ENCODE measurements at regions of chr17 and their contacts with region 1.

Region 1: DNA sequence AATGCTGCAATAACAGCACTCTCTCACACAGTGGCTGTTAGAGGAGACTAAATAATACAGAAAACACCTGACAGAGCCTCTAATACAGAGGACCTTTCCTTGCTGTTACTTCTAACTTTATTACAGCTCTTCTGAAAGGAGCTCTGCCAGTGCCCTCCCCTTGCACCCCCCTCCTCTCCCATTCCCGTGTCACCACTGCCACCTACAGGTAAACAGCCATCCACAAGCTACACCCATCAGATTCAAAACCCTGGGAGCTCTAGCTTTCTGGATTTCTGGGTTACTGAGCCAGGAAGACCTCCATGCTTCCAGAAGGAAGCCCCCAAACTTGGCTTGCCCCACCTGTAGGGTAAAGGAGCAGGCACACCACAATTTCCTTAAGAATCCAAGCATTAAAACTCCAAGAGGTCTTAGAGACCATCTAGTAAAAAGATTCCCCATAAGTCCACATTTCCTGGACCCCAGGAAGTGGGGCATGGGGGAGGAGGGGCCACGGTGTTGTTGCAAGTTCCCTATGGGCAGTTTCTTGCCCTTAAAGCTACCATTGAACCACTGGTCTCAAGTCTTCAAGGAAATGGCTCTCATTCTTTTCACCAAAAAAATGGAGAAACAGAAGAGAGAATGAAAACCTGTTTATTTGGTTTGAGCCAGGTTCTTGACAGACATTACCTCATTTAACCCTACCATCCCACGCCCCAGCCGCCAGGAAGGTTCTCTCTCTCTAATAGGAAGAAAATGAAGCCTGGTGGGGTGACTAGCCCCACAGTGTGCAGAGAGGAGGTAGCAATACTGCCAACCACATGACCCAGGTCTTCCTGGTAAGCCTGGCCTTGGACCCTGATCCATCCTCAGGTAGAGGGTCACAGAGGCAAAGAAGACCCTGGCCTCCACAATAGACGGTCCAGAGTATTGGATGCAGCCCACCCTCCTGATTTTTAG is 52.8 kb downstream of the TOM1L2 start:
- DNase-seq: peak; percentile 85
- H3K4me3 ChIP-seq: no peak overlapping the region
- H3K27ac ChIP-seq: peak overlapping the region; percentile 44 to 53; a peak in 3 of 4 replicates
- H3K4me1 ChIP-seq: peaks cover 19 to 39% of the 10 kb centered on the region in 2 experiments
- H3K27me3 ChIP-seq: no peaks in the 10 kb centered on the region
- CTCF ChIP-seq: peak; percentile 87
- EP300 ChIP-seq: no peak
- RAD21 ChIP-seq: peak; percentile 98

Region 2: GRCh38 chr17:17476865-17477467 is 442.5 kb before region 1 on chr17 and contains the start of gene MED9:
- CTCF ChIA-PET with region 1: no interaction called
- POLR2A ChIA-PET with region 1: no interaction called
- DNase-seq: peak; percentile 99
- H3K4me3 ChIP-seq: peak within 1 kb of the TSS; percentile 98 to 99
- H3K27ac ChIP-seq: peak within 1 kb of the TSS; percentile 62 to 74; a peak in 3 of 4 replicates
- H3K4me1 ChIP-seq: peaks cover 7 to 10% of the 10 kb centered on the region in 2 experiments; a peak in 3 of 4 replicates
- H3K27me3 ChIP-seq: 0 out of 2 replicates have a peak, but pooled peaks cover 6% of the 10 kb centered on the region
- CTCF ChIP-seq: no peak
- EP300 ChIP-seq: no peak
- RAD21 ChIP-seq: no peak
- polyA plus RNA-seq, gene MED9: 9.7 and 10.1 TPM in 2 replicates

Region 3: DNA sequence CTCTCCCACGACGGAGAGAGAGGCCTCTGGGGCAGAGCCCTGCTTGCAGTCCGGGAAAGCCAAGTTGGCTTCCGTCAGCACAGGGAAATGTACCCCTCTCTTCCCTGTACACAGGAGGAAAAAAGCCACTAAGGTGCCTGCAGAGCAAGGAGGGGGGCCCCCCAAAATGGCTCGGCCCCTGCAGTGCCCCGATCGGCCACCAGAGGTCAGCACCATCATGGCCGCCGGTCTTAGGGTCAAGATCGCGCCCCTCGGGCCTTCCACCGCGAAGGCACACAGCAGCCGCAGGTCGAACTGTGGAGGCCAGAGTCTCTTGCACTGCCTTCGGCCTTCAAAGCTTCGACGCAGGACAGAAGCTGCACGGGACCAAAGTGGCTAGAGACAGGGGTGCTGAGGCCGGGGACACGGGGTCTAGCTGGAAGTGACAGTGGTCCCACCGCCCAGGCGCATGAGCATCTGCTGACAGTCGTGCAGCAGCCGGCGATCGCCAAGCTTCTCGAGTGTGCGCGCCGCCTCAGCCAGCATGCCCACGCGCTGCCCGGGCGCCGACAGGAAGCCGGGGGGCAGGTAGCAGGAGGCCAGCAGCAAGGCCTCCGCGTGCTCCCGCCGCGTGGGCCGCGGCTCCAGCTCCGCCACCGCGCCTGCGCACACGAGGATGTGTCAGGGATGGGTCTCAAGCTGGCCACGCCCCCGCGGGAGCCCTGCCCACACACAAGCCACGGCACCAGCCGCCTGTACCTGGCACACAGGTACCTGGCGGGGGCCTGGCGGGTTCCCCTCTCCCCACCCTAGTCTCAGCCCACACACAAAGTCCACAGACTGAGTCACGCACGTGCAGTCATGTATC is 107.0 kb before region 1 on chr17:
- CTCF ChIA-PET with region 1: interaction called, 58 read pairs
- POLR2A ChIA-PET with region 1: no interaction called
- DNase-seq: peak; percentile 95
- H3K4me3 ChIP-seq: peak overlapping the region in 1 of 2 experiments; percentile 30; a peak in 1 of 4 replicates
- H3K27ac ChIP-seq: peak overlapping the region in 1 of 2 experiments; percentile 62; a peak in 2 of 4 replicates
- H3K4me1 ChIP-seq: peaks cover 0 to 56% of the 10 kb centered on the region in 2 experiments; a peak in 3 of 4 replicates
- H3K27me3 ChIP-seq: no peaks in the 10 kb centered on the region
- CTCF ChIP-seq: peak; percentile 98
- EP300 ChIP-seq: no peak
- RAD21 ChIP-seq: peak; percentile 80

Region 4: DNA sequence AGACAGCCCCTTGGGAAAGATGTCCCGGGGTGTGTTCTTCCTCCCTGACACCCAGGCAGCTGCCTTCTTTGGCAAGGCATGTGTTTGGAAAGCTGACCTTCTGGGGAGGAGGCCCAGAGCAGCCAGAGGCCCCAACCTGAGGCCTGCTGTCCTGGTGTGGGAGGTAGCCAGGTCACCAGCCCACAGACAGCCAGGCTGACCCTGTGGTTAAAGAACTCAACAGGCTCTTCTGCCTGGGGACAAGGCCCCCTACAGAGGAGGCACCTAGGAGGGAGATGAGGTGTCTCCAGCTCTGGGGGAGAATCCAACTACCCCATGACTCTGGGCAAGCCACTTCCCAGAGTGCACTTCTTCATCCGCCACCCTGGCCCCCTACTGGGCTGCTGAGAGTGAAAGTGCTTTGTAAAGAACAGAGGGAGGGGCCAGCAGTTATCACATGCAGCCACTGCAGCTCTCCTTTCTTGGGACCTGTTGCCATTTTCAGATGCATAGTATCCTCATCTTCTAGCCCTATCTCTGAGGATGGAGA is 69.5 kb before region 1 on chr17:
- CTCF ChIA-PET with region 1: interaction called, 10 read pairs
- POLR2A ChIA-PET with region 1: no interaction called
- DNase-seq: peak; percentile 58
- H3K4me3 ChIP-seq: no peak overlapping the region
- H3K27ac ChIP-seq: peak overlapping the region in 1 of 2 experiments; percentile 62; a peak in 1 of 4 replicates
- H3K4me1 ChIP-seq: peaks cover 19 to 83% of the 10 kb centered on the region in 2 experiments; a peak in 3 of 4 replicates
- H3K27me3 ChIP-seq: no peaks in the 10 kb centered on the region
- CTCF ChIP-seq: peak; percentile 29
- EP300 ChIP-seq: no peak
- RAD21 ChIP-seq: no peak

Region 5: GRCh38 chr17:17877529-17878358 is 41.7 kb before region 1 on chr17:
- CTCF ChIA-PET with region 1: interaction called, 37 read pairs
- POLR2A ChIA-PET with region 1: no interaction called
- DNase-seq: peak; percentile 74
- H3K4me3 ChIP-seq: 0 out of 4 replicates have a peak overlapping the region, but pooled peaks of 1 of the 2 experiments have one; percentile 9
- H3K27ac ChIP-seq: peak overlapping the region; percentile 84 to 99
- H3K4me1 ChIP-seq: peaks cover 15 to 55% of the 10 kb centered on the region in 2 experiments
- H3K27me3 ChIP-seq: no peaks in the 10 kb centered on the region
- CTCF ChIP-seq: 0 out of 2 replicates have a peak, but pooled peaks have one; percentile 21
- EP300 ChIP-seq: no peak; a peak in 1 of 4 replicates
- RAD21 ChIP-seq: peak; percentile 20

Region 6: DNA sequence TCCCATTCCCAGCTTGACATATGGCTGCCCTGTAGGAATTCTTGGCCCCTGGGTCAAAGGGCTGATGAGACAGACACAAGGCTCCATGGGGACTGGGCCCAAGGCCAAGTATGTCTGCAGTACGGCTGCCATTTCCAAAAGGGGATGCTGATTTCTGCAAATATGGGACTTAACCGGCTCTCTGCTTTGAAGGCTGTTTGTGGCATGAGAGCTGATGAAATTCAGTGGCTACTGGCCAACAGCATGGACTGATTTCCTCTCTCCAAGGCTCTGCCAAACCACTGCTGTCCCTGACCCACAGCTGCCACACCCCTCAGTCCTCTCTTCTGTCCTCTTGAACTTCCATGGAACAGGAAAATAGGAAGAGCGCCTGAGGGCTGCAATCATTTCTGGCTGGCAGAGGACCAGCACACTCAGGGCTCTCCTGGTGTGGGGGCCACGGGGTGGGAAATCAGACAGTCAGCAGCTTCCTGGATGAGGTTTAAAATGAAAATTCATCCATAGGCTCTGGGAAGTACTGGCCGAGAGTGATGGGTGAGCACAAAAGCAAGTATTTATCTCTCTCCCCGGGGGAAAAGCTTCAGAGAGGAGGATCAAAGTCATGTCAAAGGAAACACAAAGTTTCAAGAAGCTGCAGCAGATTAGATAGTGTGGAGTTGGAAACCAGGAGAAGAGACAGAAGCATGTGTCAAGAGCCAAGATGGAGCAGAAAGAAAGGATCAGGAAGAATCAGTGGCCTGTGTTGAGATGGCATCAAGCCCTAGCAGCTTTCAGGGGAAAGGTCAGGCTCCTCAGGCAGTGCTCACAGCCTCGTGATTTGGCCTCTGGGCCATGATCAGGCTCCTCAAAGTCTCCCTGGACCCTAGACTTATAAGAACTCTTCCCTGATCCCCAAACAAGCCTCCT is 18.6 kb before region 1 on chr17:
- CTCF ChIA-PET with region 1: interaction called, 38 read pairs
- POLR2A ChIA-PET with region 1: interaction called, 5 read pairs
- DNase-seq: peak; percentile 77
- H3K4me3 ChIP-seq: 0 out of 4 replicates have a peak overlapping the region, but pooled peaks of 1 of the 2 experiments have one; percentile 13
- H3K27ac ChIP-seq: peak overlapping the region; percentile 70 to 98
- H3K4me1 ChIP-seq: peaks cover 16 to 33% of the 10 kb centered on the region in 2 experiments
- H3K27me3 ChIP-seq: no peaks in the 10 kb centered on the region
- CTCF ChIP-seq: no peak
- EP300 ChIP-seq: peak; percentile 73 to 83; a peak in 3 of 4 replicates
- RAD21 ChIP-seq: no peak

Region 7: DNA sequence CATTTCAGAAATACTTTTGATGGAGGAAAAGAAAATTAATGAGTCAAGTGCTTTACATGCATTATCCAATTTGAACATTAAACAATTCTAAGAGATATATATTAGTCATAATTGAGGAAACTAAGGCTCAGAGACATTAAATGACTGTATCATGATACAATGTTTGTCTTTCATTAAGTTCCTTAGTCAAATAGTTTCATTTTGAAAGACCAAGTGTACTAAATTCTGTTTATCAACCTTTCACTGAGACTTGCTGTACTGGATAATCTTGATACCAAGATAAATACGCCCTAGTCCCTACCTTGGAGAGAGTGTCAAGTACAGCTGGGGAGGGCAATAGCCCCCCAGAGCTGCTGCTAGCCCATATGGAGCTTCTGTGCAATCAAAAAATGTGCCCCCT is 28.5 kb after region 1 on chr17:
- CTCF ChIA-PET with region 1: interaction called, 35 read pairs
- POLR2A ChIA-PET with region 1: no interaction called
- DNase-seq: no peak
- H3K4me3 ChIP-seq: 0 out of 4 replicates have a peak overlapping the region, but pooled peaks of 1 of the 2 experiments have one; percentile 18
- H3K27ac ChIP-seq: peak overlapping the region in 1 of 2 experiments; percentile 89; a peak in 2 of 4 replicates
- H3K4me1 ChIP-seq: peaks cover 43 to 70% of the 10 kb centered on the region in 2 experiments
- H3K27me3 ChIP-seq: no peaks in the 10 kb centered on the region
- CTCF ChIP-seq: no peak
- EP300 ChIP-seq: no peak
- RAD21 ChIP-seq: no peak

Region 8: DNA sequence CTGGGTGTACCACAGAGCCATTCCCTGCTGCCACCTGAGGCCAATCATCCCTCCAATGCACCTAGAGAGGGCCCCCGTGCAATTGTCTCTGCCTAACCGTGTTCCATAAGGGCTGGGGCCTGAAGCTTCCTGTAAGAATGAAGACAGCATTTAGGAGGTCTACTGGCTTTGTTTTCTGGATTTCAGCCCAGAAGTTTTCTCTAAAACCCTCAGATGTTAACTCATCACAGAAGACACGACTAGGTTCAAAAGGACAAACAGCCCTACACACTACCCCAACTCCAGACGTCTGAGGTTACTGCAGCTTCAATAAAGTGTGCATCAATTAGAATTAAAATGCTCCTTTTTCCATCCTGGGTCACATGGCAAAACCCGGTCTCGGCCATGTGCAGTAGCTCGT is 157.5 kb after region 1 on chr17:
- CTCF ChIA-PET with region 1: no interaction called
- POLR2A ChIA-PET with region 1: no interaction called
- DNase-seq: no peak
- H3K4me3 ChIP-seq: no peak overlapping the region
- H3K27ac ChIP-seq: no peak overlapping the region
- H3K4me1 ChIP-seq: peaks cover 0 to 2% of the 10 kb centered on the region in 2 experiments; a peak in 1 of 4 replicates
- H3K27me3 ChIP-seq: no peaks in the 10 kb centered on the region
- CTCF ChIP-seq: no peak
- EP300 ChIP-seq: no peak
- RAD21 ChIP-seq: no peak

Measured in SK-N-SH (cell line).